ENCODE measurements at regions of chr11 and their contacts with region 1.

Region 1: GRCh38 chr11:944706-945470 is 19.2 kb downstream of the AP2A2 start:
- DNase-seq: peak; percentile 72
- ATAC-seq: peak; percentile 96
- H3K4me3 Mint-ChIP-seq: peak overlapping the region; percentile 49
- H3K27ac Mint-ChIP-seq: peak overlapping the region; percentile 99
- H3K4me1 Mint-ChIP-seq: peaks cover 75% of the 10 kb centered on the region
- H3K27me3 Mint-ChIP-seq: no peaks in the 10 kb centered on the region
- CTCF ChIP-seq: no peak

Region 2: DNA sequence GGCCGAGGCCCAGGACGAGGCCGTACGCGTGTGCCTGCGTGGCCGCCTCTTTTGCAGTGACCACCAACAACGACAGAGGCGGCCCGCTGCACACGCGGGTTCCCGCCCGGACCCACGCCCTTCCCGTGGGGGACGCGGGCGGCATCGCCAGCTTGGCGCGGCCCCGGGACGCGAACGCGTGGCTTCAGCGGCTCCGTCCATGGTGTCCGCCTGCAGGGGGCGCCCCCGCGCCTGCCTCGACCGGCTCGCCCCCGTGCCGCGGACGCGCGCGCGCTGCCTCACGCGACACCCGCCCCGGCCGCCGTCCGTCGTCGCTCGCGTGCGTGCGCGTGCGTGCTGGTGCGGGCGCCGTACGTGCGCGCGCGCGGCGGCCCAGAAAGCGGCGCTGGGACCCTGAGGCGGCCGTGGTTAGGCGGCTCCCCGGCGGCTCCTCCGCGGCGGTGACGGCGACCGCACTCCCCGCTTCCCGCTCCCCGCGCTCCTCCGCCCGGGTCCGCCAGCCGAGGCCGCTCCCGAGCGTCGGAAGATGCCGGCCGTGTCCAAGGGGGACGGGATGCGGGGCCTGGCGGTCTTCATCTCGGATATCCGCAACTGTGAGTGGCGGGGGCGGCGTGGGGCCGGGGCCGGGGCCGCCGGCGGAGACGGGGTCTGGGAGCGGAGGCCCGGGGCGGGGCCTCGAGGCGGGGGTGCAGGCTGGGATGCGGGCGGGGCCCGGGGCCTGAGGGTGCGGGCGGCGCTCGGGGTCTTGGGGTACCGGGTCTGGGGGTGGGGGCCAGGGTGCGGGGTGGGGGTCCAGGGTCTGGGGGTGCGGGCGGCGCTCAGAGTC is 19.2 kb before region 1 on chr11 and contains the start of gene AP2A2:
- CTCF ChIA-PET with region 1: interaction called, 43 read pairs
- POLR2A ChIA-PET with region 1: interaction called, 4 read pairs
- DNase-seq: peak; percentile 87
- ATAC-seq: peak; percentile 67
- H3K4me3 Mint-ChIP-seq: peak within 1 kb of the TSS; percentile 84
- H3K27ac Mint-ChIP-seq: peak within 1 kb of the TSS; percentile 82; the same call in 1 of the 2 replicates
- H3K4me1 Mint-ChIP-seq: peaks cover 14% of the 10 kb centered on the region
- H3K27me3 Mint-ChIP-seq: no peaks in the 10 kb centered on the region
- CTCF ChIP-seq: peak; percentile 64
- total RNA-seq, gene AP2A2: 47.1 to 52.3 TPM (median 51.0 TPM) in 3 replicates

Region 3: GRCh38 chr11:955154-956063 is 10.5 kb after region 1 on chr11:
- CTCF ChIA-PET with region 1: interaction called, 17 read pairs
- POLR2A ChIA-PET with region 1: interaction called, 3 read pairs
- DNase-seq: no peak
- ATAC-seq: peak; percentile 38
- H3K4me3 Mint-ChIP-seq: no peak overlapping the region
- H3K27ac Mint-ChIP-seq: peak overlapping the region; percentile 83
- H3K4me1 Mint-ChIP-seq: peaks cover 41% of the 10 kb centered on the region
- H3K27me3 Mint-ChIP-seq: no peaks in the 10 kb centered on the region
- CTCF ChIP-seq: no peak

Region 4: DNA sequence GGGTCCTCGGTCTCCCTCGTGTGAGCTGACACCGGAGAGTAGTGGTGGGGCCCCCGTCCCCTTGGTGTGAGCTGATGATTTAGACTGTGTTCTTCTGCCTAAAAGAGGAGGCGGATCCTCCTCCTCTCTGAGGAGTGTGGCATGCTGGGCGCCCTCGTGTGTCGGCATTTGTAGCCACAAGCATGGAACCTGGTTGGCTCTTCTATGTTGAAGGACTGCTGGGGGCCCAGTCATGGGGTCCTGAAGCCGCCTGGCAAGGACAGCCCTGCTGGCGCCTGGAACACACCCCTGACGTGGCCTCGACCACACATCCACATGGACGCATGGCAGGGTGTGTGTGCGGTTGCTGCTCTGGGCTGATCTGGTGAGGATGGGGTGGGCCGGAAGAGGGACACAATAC is 30.9 kb after region 1 on chr11:
- CTCF ChIA-PET with region 1: interaction called, 29 read pairs
- POLR2A ChIA-PET with region 1: no interaction called
- DNase-seq: peak; percentile 72
- ATAC-seq: peak; percentile 89
- H3K4me3 Mint-ChIP-seq: no peak overlapping the region
- H3K27ac Mint-ChIP-seq: peak overlapping the region; percentile 68
- H3K4me1 Mint-ChIP-seq: peaks cover 12% of the 10 kb centered on the region
- H3K27me3 Mint-ChIP-seq: no peaks in the 10 kb centered on the region
- CTCF ChIP-seq: no peak

Region 5: DNA sequence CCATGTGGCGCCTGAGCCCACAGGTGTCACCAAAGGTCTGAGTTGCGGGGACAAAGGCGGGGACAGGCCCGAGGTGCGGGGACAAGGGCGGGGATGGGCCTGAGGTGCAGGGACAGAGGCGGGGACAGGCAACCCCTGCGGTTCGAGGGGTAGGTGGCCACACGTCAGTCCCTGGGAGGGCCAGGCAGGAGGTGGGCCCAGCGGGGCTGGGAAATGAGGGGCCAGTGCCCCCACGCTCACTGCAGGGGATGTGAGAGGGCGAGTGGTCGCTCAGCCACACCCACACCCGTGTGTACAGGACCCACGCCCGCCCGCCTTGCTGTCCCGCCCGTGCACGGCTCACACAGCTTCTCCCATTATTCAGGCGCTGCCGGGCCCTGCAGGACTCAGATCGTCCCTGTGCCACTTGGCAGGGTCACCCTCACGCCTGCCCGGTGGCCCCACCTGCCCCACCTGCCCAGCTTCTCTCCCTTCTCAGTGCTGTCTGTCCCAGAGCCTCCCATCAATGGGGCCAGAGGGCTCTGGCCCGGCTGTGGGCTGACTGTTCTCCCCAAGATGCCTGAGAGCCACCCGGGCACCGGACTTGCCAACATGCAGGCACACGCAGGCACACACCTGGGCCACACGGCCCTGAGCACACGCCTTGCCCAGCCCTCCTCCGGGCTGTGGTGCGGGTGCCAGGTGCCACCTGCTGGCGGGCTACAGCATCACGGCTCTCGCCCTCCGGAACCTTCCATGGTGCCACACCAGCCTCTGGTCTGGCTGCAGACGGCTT is 105.9 kb after region 1 on chr11:
- CTCF ChIA-PET with region 1: interaction called, 10 read pairs
- POLR2A ChIA-PET with region 1: no interaction called
- DNase-seq: peak; percentile 85
- ATAC-seq: peak; percentile 95
- H3K4me3 Mint-ChIP-seq: no peak overlapping the region
- H3K27ac Mint-ChIP-seq: no peak overlapping the region
- H3K4me1 Mint-ChIP-seq: no peaks in the 10 kb centered on the region
- H3K27me3 Mint-ChIP-seq: peaks cover 3% of the 10 kb centered on the region; the same call in 1 of the 2 replicates
- CTCF ChIP-seq: peak; percentile 85

Measured in WTC11 (cell line).